ENCODE measurements at regions of chr3 and their contacts with region 1.

Region 1: DNA sequence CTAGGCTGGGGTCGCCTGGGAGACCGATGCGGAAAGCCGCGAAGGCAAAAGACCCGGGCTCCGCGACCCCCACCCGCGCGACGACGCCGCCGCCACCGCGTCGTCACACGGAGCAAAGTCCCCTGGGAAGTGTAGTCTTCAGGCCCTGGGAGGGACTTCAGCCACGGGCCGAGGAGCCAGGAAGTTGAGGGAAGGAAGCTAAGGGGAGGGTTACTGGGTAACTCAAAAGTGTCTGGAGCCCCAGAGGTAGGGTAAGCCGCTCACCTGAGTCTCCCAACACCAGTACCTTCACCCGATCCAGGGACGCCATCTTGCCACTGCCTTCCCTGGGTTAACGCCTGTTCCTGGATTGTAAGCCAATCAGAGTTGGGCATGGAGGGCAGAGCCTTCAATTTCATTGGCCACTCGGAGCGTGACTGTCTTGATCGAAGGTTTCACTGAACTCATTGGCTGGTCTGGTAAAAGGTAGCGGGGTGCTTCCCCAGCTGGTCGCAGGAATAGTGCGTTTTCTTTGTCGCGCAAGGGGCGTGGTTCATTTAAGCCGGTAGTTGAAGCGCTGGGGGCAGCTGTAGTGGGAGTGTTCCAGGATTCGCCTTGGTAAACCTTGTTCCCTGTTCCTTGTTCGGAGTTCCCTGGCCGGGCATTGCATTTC is at the starts of genes GTF2E1 and RABL3:
- DNase-seq: peak; percentile 94 to 100 (median 98)

Region 2: DNA sequence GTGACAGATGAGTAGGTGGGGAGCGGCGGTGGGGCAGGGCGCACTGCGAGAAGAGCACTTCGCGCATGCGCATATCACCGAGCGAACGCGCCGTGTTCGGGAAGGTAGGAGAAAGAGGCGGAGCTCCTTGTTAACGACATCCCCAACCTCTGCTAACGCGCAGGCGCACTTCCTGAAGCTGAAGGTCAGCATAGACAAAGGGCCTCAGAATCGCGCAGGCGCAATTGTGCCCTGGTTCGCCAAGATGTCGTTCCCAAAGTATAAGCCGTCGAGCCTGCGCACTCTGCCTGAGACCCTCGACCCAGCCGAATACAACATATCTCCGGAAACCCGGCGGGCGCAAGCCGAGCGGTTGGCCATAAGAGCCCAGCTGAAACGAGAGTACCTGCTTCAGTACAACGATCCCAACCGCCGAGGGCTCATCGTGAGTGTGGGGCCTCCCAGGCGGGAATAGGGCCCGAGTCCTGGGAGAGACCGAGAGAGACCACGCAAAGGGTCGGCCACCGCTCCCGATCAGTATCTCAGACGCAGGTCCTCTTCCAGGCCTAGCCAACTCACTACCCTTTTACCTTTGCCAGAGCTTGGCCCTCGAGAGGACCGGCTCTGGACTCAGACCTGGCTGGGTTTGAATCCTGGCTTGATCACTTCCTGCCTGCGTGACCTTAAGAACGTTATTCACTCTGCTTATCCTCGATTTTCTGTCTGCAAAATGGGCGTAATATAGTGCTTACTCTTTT is 146.0 kb before region 1 on chr3 and contains the start of gene NDUFB4:
- intact Hi-C with region 1: loop called (anchors 1 kb)
- DNase-seq: peak; percentile 93 to 99 (median 97)